Mammary epithelial cell (primary cell): ENCODE measurements at regions of chr3 and their contacts with region 1.

Region 1: GRCh38 chr3:49673715-49674496 is at the start of gene APEH:
- DNase-seq: peak; percentile 98
- H3K4me3 ChIP-seq: peak within 1 kb of the TSS; percentile 74 to 95 (median 92)
- H3K27ac ChIP-seq: peak within 1 kb of the TSS; percentile 73
- H3K4me1 ChIP-seq: peaks cover 18% of the 10 kb centered on the region
- H3K27me3 ChIP-seq: no peaks in the 10 kb centered on the region
- CTCF ChIP-seq: no peak
- total RNA-seq, gene APEH: 130 to 183 TPM

Region 2: GRCh38 chr3:49021813-49022687 is 651.9 kb before region 1 on chr3 and contains the start of gene NDUFAF3:
- CTCF ChIA-PET with region 1: interaction called, 14 read pairs
- dilution Hi-C with region 1: no loop called
- in situ Hi-C with region 1: no loop called
- intact Hi-C with region 1: no loop called
- DNase-seq: peak; percentile 95
- H3K4me3 ChIP-seq: peak within 1 kb of the TSS; percentile 65 to 89 (median 86)
- H3K27ac ChIP-seq: peak within 1 kb of the TSS; percentile 89
- H3K4me1 ChIP-seq: peaks cover 34% of the 10 kb centered on the region
- H3K27me3 ChIP-seq: no peaks in the 10 kb centered on the region
- CTCF ChIP-seq: peak; percentile 75 to 97
- total RNA-seq, gene NDUFAF3: 27.0 to 83.6 TPM

Region 3: DNA sequence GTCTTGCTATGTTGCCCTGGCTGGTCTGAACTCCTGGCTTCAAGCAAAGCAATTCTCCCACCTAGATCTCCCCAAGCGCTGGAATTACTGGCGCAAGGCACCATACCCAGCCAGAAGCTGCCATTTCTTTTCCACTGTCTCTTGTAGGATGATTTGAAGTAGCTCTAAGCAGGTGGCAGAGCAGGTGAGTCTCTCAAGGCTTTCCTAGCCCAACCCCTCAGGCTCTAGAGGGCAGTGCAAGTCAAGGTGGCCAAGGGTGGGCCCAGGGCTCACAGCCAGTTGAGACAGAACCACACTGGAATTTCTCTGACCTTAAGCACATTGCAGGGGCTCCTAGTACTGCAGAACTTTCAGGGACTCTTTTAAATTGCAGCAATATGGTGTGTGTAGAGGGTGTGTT is 219.4 kb before region 1 on chr3:
- CTCF ChIA-PET with region 1: interaction called, 4 read pairs
- dilution Hi-C with region 1: no loop called
- in situ Hi-C with region 1: no loop called
- intact Hi-C with region 1: loop called (anchors 1 kb)
- DNase-seq: peak; percentile 47
- H3K4me3 ChIP-seq: no peak overlapping the region
- H3K27ac ChIP-seq: no peak overlapping the region
- H3K4me1 ChIP-seq: peaks cover 16% of the 10 kb centered on the region
- H3K27me3 ChIP-seq: no peaks in the 10 kb centered on the region
- CTCF ChIP-seq: peak; percentile 45 to 55

Region 4: DNA sequence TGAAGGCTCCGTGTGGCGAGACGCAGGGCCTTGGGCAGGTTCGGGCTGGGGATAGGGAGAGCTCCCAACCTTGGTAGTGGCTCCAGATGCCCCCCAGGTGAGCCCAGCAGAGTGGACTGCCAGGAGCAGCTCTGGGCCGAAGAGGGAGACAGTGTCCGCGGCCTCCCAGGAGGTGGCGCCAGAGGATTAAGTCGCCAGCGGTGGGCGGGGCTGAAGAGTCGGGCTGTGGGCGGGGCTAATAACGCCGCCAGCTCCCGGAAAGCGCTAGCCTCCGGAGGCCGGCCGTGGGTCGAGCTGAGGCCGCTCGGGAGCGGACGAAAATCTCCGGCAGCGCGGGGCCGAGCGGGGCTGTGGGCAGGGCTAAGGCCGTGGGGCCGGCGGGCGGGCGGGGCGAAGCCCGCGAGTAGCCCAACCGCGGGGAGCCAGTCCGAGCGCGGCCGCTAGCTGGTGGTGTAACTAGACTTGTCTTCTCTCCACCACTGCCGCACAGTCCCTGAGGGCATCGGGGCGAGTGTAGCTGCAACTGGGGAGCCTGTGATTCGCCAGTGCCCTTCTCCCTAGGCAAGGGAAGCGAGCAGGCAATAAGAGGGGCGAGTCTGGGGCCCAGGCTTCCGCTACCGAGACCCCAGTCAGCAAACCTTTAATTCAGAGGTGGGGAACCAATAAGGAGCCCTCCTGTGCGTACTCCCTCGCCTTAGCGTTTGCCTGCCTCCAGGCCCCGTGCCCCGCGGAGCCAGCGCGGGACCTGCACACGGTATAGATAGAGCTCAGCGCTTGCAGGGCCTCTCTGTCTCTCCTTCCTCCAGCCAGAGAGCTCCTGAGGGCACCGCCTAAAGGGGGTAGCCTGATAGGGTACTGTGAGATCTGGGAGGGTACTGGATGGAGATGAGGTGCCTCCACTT is 134.0 kb before region 1 on chr3:
- CTCF ChIA-PET with region 1: interaction called, 34 read pairs
- dilution Hi-C with region 1: no loop called
- in situ Hi-C with region 1: loop called (anchors 5 to 10 kb)
- intact Hi-C with region 1: loop called (anchors 1 kb)
- DNase-seq: peak; percentile 93
- H3K4me3 ChIP-seq: peak overlapping the region; percentile 30 to 47 (median 42)
- H3K27ac ChIP-seq: no peak overlapping the region
- H3K4me1 ChIP-seq: peaks cover 5% of the 10 kb centered on the region
- H3K27me3 ChIP-seq: no peaks in the 10 kb centered on the region
- CTCF ChIP-seq: peak; percentile 55 to 89

Region 5: DNA sequence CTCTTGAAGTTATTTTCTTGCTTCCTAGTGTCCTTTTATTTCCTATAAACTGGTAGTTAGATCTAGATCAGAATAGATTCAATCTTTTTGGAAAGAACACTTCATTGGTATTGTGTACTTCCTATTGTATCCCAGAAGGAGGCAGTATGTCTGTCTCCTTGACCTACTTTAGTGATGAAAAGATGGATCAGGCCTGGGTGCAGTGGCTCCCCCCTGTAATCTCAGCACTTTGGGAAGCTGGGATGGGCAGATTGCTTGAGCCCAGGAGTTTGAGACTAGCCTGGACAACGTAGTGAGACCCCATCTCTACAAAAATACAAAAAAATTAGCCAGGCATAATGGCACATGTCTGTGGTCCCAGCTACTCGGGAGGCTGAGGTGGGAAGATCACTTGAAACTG is 107.6 kb before region 1 on chr3:
- CTCF ChIA-PET with region 1: interaction called, 29 read pairs
- dilution Hi-C with region 1: no loop called
- in situ Hi-C with region 1: no loop called
- intact Hi-C with region 1: loop called (anchors 1 kb)
- DNase-seq: no peak
- H3K4me3 ChIP-seq: no peak overlapping the region
- H3K27ac ChIP-seq: no peak overlapping the region
- H3K4me1 ChIP-seq: peaks cover 8% of the 10 kb centered on the region
- H3K27me3 ChIP-seq: peaks cover 2% of the 10 kb centered on the region
- CTCF ChIP-seq: peak in 1 of 2 donors; percentile 40

Region 6: GRCh38 chr3:49641921-49642707 is 31.8 kb before region 1 on chr3:
- CTCF ChIA-PET with region 1: no interaction called
- dilution Hi-C with region 1: loop called (anchors 5 kb)
- in situ Hi-C with region 1: no loop called
- intact Hi-C with region 1: no loop called
- DNase-seq: no peak
- H3K4me3 ChIP-seq: no peak overlapping the region
- H3K27ac ChIP-seq: no peak overlapping the region
- H3K4me1 ChIP-seq: peaks cover 16% of the 10 kb centered on the region
- H3K27me3 ChIP-seq: peaks cover 3% of the 10 kb centered on the region
- CTCF ChIP-seq: no peak